Activated CD8-positive, alpha-beta T cell treated with anti-CD3 and anti-CD28 coated beads for 36 hours (primary cell): ENCODE measurements at regions of chr4 and their contacts with region 1.

Region 1: DNA sequence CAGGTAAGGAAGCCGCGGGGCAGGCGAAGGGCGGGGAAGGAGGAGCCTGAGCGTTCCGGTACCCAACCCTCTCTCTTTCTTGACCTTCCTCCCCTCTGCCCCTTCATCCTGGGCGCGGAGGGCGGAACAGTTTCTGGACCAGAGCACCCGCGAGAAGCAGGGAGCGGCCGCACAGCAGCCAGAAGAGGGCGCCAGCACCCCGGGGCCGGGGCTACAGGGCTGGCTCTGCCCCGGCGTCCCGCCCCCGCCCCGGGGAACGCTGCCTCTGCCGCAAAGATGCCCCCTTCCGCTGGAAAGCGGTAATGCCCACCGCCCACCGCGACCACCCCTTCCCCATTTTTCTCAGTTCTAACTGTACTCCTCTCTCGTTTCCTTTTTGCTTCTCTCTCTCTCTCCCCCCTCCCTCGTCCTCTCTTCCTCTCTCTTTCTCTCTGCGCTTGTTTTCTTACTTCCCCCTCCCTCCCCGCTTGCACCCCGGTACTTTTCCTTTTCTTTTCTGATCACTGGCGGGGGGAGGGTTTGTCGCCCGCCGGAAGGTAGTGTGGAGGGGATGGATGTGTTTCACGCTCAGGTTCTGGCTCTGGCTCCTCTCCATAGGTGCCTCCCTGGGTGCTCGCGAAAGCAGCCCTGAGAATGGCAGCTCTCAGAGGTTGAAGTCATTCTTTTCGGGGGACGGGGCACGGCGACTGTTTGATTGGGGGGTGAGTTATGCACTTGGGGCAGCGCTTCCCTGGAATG is 13.1 kb upstream of the PRDM8 start:
- DNase-seq: peak; percentile 96
- ATAC-seq: peak; percentile 78
- H3K4me3 Mint-ChIP-seq: peak overlapping the region; percentile 85
- H3K27ac Mint-ChIP-seq: peak overlapping the region; percentile 92
- H3K4me1 Mint-ChIP-seq: peaks cover 47% of the 10 kb centered on the region
- H3K27me3 Mint-ChIP-seq: peaks cover 10% of the 10 kb centered on the region
- CTCF ChIP-seq: peak; percentile 95

Region 2: GRCh38 chr4:79872738-79873137 is 311.5 kb before region 1 on chr4:
- CTCF ChIA-PET with region 1: no interaction called
- POLR2A ChIA-PET with region 1: no interaction called
- intact Hi-C with region 1: no loop called
- DNase-seq: no peak
- ATAC-seq: no peak
- H3K4me3 Mint-ChIP-seq: no peak overlapping the region
- H3K27ac Mint-ChIP-seq: no peak overlapping the region
- H3K4me1 Mint-ChIP-seq: no peaks in the 10 kb centered on the region
- H3K27me3 Mint-ChIP-seq: peaks cover 4% of the 10 kb centered on the region
- CTCF ChIP-seq: no peak

Region 3: DNA sequence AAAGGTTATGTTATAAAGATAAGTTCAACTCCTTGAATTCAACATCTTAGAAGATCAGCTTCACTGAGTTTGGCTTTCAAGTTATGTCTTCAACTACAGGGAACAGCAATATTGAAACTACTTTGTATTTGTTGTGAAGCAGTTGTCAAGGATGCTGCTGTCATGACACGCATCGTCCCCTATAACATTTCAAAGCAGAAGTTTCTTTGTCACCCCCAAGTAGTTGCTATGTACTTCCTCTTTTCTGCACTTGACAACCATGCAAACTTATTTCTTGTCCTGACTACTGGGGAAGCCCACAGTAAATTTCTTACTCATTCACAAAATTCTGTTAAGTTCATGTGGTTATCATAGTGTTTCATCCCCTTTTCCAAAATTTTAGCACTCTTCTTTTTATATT is 125.5 kb before region 1 on chr4:
- CTCF ChIA-PET with region 1: interaction called, 5 read pairs
- POLR2A ChIA-PET with region 1: interaction called, 3 read pairs
- intact Hi-C with region 1: loop called (anchors 2 kb)
- DNase-seq: peak; percentile 71
- ATAC-seq: peak; percentile 92
- H3K4me3 Mint-ChIP-seq: peak overlapping the region; percentile 73
- H3K27ac Mint-ChIP-seq: peak overlapping the region; percentile 94
- H3K4me1 Mint-ChIP-seq: peaks cover 42% of the 10 kb centered on the region
- H3K27me3 Mint-ChIP-seq: no peaks in the 10 kb centered on the region
- CTCF ChIP-seq: no peak

Region 4: DNA sequence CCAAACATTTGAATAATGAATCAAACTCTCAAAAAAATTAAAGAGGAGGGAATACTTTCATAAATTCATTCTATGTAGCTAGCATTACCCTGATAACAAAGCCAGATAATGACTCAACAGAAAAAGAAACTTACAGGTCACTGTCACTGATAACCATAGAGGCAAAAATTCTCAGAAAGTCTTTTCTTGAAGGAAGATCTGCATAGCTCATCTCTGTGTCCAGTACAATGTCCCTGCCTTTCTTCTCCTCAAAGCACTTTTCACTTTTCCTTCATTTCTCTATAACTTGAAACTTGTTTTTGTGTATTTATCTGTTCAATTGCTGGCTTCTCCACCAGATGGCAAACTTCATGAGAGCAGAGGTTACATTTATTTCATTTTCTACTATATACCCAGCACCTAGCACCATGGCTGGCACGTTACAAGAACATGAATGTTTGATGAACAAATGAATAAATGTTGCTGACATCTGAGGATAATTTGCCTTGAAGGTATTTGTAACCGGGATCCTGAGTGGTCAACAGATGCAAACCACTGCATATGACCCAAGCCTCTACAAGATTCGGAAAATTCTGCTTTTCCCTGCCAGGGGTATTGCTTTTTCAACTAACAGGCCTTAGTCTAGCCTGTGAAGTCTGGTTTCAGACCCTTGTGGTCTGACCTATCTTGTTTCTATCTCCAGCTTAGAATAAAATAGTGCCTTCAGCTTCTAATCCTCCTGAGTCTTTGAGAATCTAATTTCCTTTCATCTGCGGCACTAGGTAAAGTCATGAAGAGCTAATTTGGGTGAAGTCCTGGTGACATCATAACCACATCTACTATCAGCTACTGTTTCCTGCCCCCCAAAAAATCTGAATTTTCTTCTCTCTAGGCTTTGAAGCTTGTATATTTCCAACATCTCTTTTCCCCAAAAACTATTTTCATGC is 58.7 kb before region 1 on chr4:
- CTCF ChIA-PET with region 1: interaction called, 153 read pairs
- POLR2A ChIA-PET with region 1: interaction called, 7 read pairs
- intact Hi-C with region 1: loop called (anchors 1 kb)
- DNase-seq: peak; percentile 56
- ATAC-seq: peak; percentile 86
- H3K4me3 Mint-ChIP-seq: peak overlapping the region; percentile 30
- H3K27ac Mint-ChIP-seq: peak overlapping the region; percentile 87
- H3K4me1 Mint-ChIP-seq: peaks cover 55% of the 10 kb centered on the region
- H3K27me3 Mint-ChIP-seq: no peaks in the 10 kb centered on the region
- CTCF ChIP-seq: peak; percentile 74

Region 5: GRCh38 chr4:80153874-80154544 is 30.2 kb before region 1 on chr4:
- CTCF ChIA-PET with region 1: interaction called, 25 read pairs
- POLR2A ChIA-PET with region 1: interaction called, 3 read pairs
- intact Hi-C with region 1: no loop called
- DNase-seq: no peak
- ATAC-seq: peak; percentile 89
- H3K4me3 Mint-ChIP-seq: peak overlapping the region; percentile 30
- H3K27ac Mint-ChIP-seq: peak overlapping the region; percentile 91
- H3K4me1 Mint-ChIP-seq: peaks cover 34% of the 10 kb centered on the region
- H3K27me3 Mint-ChIP-seq: no peaks in the 10 kb centered on the region
- CTCF ChIP-seq: no peak

Region 6: DNA sequence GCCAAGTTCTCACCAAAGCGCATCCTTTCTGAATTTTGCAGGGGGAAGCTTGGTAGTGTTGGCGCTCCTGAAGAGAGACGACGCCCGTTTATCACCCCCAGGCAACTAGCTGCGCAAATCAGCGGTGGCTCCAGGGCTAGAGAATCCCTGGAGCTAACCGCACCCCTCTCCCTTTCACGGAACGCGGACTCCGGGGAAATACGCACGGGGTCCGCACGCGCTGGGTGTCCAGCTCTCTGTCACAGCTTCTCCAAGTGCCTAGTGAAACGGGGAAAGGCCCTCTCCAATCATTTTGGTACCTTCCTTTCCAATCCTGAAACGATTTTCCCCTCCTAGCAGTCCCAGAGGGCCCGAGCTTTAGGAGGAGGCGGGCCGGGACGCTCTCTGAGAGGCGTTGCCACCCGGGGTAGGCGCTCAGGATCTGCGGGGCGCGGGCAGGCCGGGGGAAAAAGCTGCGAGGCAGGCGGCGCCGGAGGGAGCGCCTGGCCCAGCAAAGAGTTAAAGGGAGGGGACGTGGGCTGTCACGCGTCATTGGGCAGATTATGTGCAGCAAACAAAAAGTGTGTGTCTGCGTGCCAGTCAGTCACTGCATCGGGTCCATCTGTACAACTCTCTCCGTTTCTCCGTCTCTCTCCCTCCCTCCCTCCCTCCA is 12.8 kb after region 1 on chr4 and contains the start of gene PRDM8:
- CTCF ChIA-PET with region 1: interaction called, 44 read pairs
- POLR2A ChIA-PET with region 1: interaction called, 40 read pairs
- intact Hi-C with region 1: loop called (anchors 2 kb)
- DNase-seq: peak; percentile 61
- ATAC-seq: peak; percentile 55
- H3K4me3 Mint-ChIP-seq: peak within 1 kb of the TSS; percentile 71
- H3K27ac Mint-ChIP-seq: no peak within 1 kb of the TSS
- H3K4me1 Mint-ChIP-seq: peaks cover 40% of the 10 kb centered on the region
- H3K27me3 Mint-ChIP-seq: peaks cover 30% of the 10 kb centered on the region
- CTCF ChIP-seq: no peak
- total RNA-seq, gene PRDM8: 2.8 to 3.2 TPM

Region 7: GRCh38 chr4:80215449-80216052 is 31.3 kb after region 1 on chr4:
- CTCF ChIA-PET with region 1: interaction called, 12 read pairs
- POLR2A ChIA-PET with region 1: interaction called, 3 read pairs
- intact Hi-C with region 1: no loop called
- DNase-seq: no peak
- ATAC-seq: no peak
- H3K4me3 Mint-ChIP-seq: no peak overlapping the region
- H3K27ac Mint-ChIP-seq: no peak overlapping the region
- H3K4me1 Mint-ChIP-seq: no peaks in the 10 kb centered on the region
- H3K27me3 Mint-ChIP-seq: peaks cover 22% of the 10 kb centered on the region
- CTCF ChIP-seq: peak; percentile 85

Region 8: DNA sequence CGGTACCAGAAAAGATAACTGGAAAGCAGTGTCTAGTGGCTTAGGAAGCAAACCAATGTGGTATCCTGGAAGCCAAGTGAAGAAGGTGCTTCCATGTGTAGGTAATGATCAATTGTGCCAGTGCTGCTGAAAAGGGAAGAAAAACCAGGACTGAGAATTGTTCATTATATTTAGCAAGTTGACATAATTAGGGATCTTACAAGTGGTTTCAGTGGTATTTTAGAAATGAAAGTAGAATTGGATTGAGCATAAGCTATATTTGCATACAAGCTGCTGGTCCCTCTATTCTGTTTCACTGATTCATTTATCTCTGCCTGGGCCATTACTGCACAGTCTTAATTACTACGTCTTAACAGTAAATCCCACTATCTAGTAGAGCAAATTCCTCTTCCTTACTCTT is 45.4 kb after region 1 on chr4:
- CTCF ChIA-PET with region 1: no interaction called
- POLR2A ChIA-PET with region 1: no interaction called
- intact Hi-C with region 1: no loop called
- DNase-seq: no peak
- ATAC-seq: no peak
- H3K4me3 Mint-ChIP-seq: no peak overlapping the region
- H3K27ac Mint-ChIP-seq: no peak overlapping the region
- H3K4me1 Mint-ChIP-seq: no peaks in the 10 kb centered on the region
- H3K27me3 Mint-ChIP-seq: peaks cover 8% of the 10 kb centered on the region
- CTCF ChIP-seq: no peak

Region 9: GRCh38 chr4:80309294-80310004 is 125.2 kb after region 1 on chr4:
- CTCF ChIA-PET with region 1: no interaction called
- POLR2A ChIA-PET with region 1: no interaction called
- intact Hi-C with region 1: no loop called
- DNase-seq: no peak
- ATAC-seq: no peak
- H3K4me3 Mint-ChIP-seq: no peak overlapping the region
- H3K27ac Mint-ChIP-seq: no peak overlapping the region
- H3K4me1 Mint-ChIP-seq: no peaks in the 10 kb centered on the region
- H3K27me3 Mint-ChIP-seq: peaks cover 13% of the 10 kb centered on the region
- CTCF ChIP-seq: no peak